ENCODE measurements at regions of chr14 and their contacts with region 1.

Region 1: GRCh38 chr14:75906676-75907280 is 75.0 kb downstream of the TGFB3 start:
- DNase-seq: peak; percentile 39
- H3K4me3 ChIP-seq: no peak overlapping the region
- H3K27ac ChIP-seq: no peak overlapping the region
- H3K4me1 ChIP-seq: peaks cover 9 to 13% of the 10 kb centered on the region in 2 experiments; a peak in 3 of 4 replicates
- H3K27me3 ChIP-seq: no peaks in the 10 kb centered on the region
- CTCF ChIP-seq: peak; percentile 98
- EP300 ChIP-seq: no peak
- RAD21 ChIP-seq: peak; percentile 87

Region 2: GRCh38 chr14:75709207-75709812 is 197.5 kb before region 1 on chr14:
- CTCF ChIA-PET with region 1: interaction called, 65 read pairs
- POLR2A ChIA-PET with region 1: no interaction called
- DNase-seq: peak; percentile 52
- H3K4me3 ChIP-seq: no peak overlapping the region; a peak in 1 of 4 replicates
- H3K27ac ChIP-seq: no peak overlapping the region
- H3K4me1 ChIP-seq: peaks cover 6 to 11% of the 10 kb centered on the region in 2 experiments; a peak in 3 of 4 replicates
- H3K27me3 ChIP-seq: no peaks in the 10 kb centered on the region
- CTCF ChIP-seq: peak; percentile 90
- EP300 ChIP-seq: no peak
- RAD21 ChIP-seq: peak; percentile 85

Region 3: GRCh38 chr14:75866970-75867369 is 39.8 kb before region 1 on chr14:
- CTCF ChIA-PET with region 1: interaction called, 17 read pairs
- POLR2A ChIA-PET with region 1: no interaction called
- DNase-seq: no peak
- H3K4me3 ChIP-seq: no peak overlapping the region
- H3K27ac ChIP-seq: peak overlapping the region in 1 of 2 experiments; percentile 98; a peak in 2 of 4 replicates
- H3K4me1 ChIP-seq: peaks cover 14 to 40% of the 10 kb centered on the region in 2 experiments
- H3K27me3 ChIP-seq: no peaks in the 10 kb centered on the region
- CTCF ChIP-seq: no peak
- EP300 ChIP-seq: no peak
- RAD21 ChIP-seq: no peak

Region 4: GRCh38 chr14:75884198-75884611 is 22.6 kb before region 1 on chr14:
- CTCF ChIA-PET with region 1: interaction called, 83 read pairs
- POLR2A ChIA-PET with region 1: no interaction called
- DNase-seq: peak; percentile 21
- H3K4me3 ChIP-seq: no peak overlapping the region
- H3K27ac ChIP-seq: peak overlapping the region; percentile 84 to 96
- H3K4me1 ChIP-seq: peaks cover 6 to 51% of the 10 kb centered on the region in 2 experiments
- H3K27me3 ChIP-seq: no peaks in the 10 kb centered on the region
- CTCF ChIP-seq: peak; percentile 55
- EP300 ChIP-seq: peak in 1 of 2 experiments; percentile 76; a peak in 2 of 4 replicates
- RAD21 ChIP-seq: peak; percentile 25

Region 5: GRCh38 chr14:75934998-75935628 is 28.3 kb after region 1 on chr14:
- CTCF ChIA-PET with region 1: interaction called, 10 read pairs
- POLR2A ChIA-PET with region 1: no interaction called
- DNase-seq: no peak
- H3K4me3 ChIP-seq: no peak overlapping the region
- H3K27ac ChIP-seq: no peak overlapping the region
- H3K4me1 ChIP-seq: no peaks in the 10 kb centered on the region
- H3K27me3 ChIP-seq: no peaks in the 10 kb centered on the region
- CTCF ChIP-seq: no peak
- EP300 ChIP-seq: no peak
- RAD21 ChIP-seq: no peak

Region 6: GRCh38 chr14:75960231-75960630 is 53.5 kb after region 1 on chr14:
- CTCF ChIA-PET with region 1: interaction called, 21 read pairs
- POLR2A ChIA-PET with region 1: no interaction called
- DNase-seq: peak; percentile 21
- H3K4me3 ChIP-seq: no peak overlapping the region
- H3K27ac ChIP-seq: peak overlapping the region in 1 of 2 experiments; percentile 51; a peak in 2 of 4 replicates
- H3K4me1 ChIP-seq: peaks cover 0 to 12% of the 10 kb centered on the region in 2 experiments; a peak in 2 of 4 replicates
- H3K27me3 ChIP-seq: no peaks in the 10 kb centered on the region
- CTCF ChIP-seq: no peak
- EP300 ChIP-seq: no peak
- RAD21 ChIP-seq: no peak

Region 7: GRCh38 chr14:76386915-76387782 is 480.4 kb after region 1 on chr14:
- CTCF ChIA-PET with region 1: interaction called, 14 read pairs
- POLR2A ChIA-PET with region 1: no interaction called
- DNase-seq: peak; percentile 90
- H3K4me3 ChIP-seq: peak overlapping the region in 1 of 2 experiments; percentile 50; a peak in 1 of 4 replicates
- H3K27ac ChIP-seq: no peak overlapping the region
- H3K4me1 ChIP-seq: no peaks in the 10 kb centered on the region; a peak in 1 of 4 replicates
- H3K27me3 ChIP-seq: peaks cover 46% of the 10 kb centered on the region
- CTCF ChIP-seq: peak; percentile 97
- EP300 ChIP-seq: no peak
- RAD21 ChIP-seq: peak; percentile 95

Measured in SK-N-SH (cell line).